ENCODE measurements at regions of chr12 and their contacts with region 1.

Region 1: DNA sequence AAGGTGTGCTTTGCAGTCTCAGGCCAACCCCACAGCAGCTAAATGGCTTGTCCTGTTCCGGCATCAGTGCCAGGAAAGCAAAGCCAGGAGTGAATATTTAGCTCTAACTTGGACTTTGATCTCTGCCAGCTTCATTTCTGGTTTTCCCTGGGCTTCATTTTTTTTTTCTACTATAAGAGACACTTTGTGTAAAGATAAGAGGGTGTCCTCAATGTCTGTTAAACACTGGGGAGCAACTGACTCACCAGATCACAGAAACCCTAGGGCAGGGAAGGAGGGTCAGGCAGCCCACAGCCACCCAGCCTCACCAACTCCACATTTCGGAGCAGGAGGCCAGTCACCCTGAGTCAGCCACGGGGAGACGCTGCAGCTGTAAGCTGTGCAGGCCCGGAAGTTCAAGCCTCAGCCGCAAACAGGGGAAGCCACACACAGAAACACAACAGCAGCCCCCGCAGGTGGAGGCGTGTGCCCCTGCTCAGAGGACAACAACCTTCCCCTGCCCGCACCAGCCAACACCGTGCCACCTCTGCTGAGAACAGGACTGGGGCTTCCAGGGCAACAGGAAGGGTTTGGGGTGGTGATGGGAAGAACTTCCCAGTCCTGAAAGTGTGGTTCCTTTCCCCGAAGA is 6.3 kb downstream of the TNFRSF1A start:
- DNase-seq: peak; percentile 64 to 93 (median 80)
- ATAC-seq: peak; percentile 74 to 80
- H3K4me3 Mint-ChIP-seq: no peak overlapping the region
- H3K27ac Mint-ChIP-seq: peak overlapping the region in 1 of 10 donors; percentile 81
- H3K4me1 Mint-ChIP-seq: peaks cover 36 to 59% (median 52%) of the 10 kb centered on the region in 4 donors
- H3K27me3 Mint-ChIP-seq: peaks cover 0 to 3% (median 0%) of the 10 kb centered on the region in 5 donors

Region 2: DNA sequence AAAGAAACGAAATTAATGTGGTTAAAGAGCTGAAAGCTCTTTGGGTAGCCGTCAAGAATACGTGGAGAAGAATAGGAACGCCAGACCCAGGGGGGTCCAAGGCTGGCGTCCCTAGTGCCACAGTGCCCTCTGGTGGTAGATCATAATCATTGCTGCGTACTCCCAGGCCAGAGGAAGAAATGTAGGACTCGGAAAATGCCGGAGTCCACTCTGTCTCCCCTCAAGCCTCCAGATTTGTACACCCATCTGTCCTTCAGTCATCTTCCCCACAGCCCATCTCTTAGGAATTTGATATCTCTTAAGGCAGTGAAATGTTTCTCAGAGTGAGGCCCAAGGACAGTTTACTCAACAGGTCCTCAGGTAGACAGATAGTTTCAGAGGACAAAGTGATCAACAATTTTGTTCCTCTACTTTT is 50.5 kb before region 1 on chr12:
- POLR2A ChIA-PET with region 1: no interaction called
- DNase-seq: peak; percentile 41 to 80 (median 63)
- ATAC-seq: peak; percentile 77 to 96
- H3K4me3 Mint-ChIP-seq: no peak overlapping the region
- H3K27ac Mint-ChIP-seq: no peak overlapping the region
- H3K4me1 Mint-ChIP-seq: peaks cover 0 to 4% (median 3%) of the 10 kb centered on the region in 4 donors
- H3K27me3 Mint-ChIP-seq: peaks cover 4 to 29% (median 12%) of the 10 kb centered on the region in 5 donors

Region 3: GRCh38 chr12:6307529-6307928 is 28.0 kb before region 1 on chr12:
- POLR2A ChIA-PET with region 1: no interaction called
- DNase-seq: no peak
- ATAC-seq: no peak
- H3K4me3 Mint-ChIP-seq: no peak overlapping the region
- H3K27ac Mint-ChIP-seq: no peak overlapping the region
- H3K4me1 Mint-ChIP-seq: peaks cover 0 to 2% (median 0%) of the 10 kb centered on the region in 4 donors
- H3K27me3 Mint-ChIP-seq: peaks cover 3 to 26% (median 13%) of the 10 kb centered on the region in 5 donors

Region 4: GRCh38 chr12:6367065-6367968 is 31.8 kb after region 1 on chr12:
- POLR2A ChIA-PET with region 1: interaction called, 358 read pairs
- DNase-seq: peak in 9 of 10 donors; percentile 20 to 78 (median 39)
- ATAC-seq: peak; percentile 70 to 74
- H3K4me3 Mint-ChIP-seq: peak overlapping the region in 4 of 10 donors; percentile 15 to 36 (median 35)
- H3K27ac Mint-ChIP-seq: peak overlapping the region; percentile 34 to 88 (median 78)
- H3K4me1 Mint-ChIP-seq: peaks cover 16 to 44% (median 40%) of the 10 kb centered on the region in 4 donors
- H3K27me3 Mint-ChIP-seq: no peaks in the 10 kb centered on the region

Region 5: GRCh38 chr12:6423267-6424007 is 87.9 kb after region 1 on chr12:
- POLR2A ChIA-PET with region 1: interaction called, 27 read pairs
- DNase-seq: peak; percentile 45 to 91 (median 76)
- ATAC-seq: peak; percentile 62 to 71
- H3K4me3 Mint-ChIP-seq: peak overlapping the region in 7 of 10 donors; percentile 0 to 55 (median 25)
- H3K27ac Mint-ChIP-seq: peak overlapping the region; percentile 71 to 93 (median 87)
- H3K4me1 Mint-ChIP-seq: peaks cover 20 to 46% (median 38%) of the 10 kb centered on the region in 4 donors
- H3K27me3 Mint-ChIP-seq: no peaks in the 10 kb centered on the region

Region 6: DNA sequence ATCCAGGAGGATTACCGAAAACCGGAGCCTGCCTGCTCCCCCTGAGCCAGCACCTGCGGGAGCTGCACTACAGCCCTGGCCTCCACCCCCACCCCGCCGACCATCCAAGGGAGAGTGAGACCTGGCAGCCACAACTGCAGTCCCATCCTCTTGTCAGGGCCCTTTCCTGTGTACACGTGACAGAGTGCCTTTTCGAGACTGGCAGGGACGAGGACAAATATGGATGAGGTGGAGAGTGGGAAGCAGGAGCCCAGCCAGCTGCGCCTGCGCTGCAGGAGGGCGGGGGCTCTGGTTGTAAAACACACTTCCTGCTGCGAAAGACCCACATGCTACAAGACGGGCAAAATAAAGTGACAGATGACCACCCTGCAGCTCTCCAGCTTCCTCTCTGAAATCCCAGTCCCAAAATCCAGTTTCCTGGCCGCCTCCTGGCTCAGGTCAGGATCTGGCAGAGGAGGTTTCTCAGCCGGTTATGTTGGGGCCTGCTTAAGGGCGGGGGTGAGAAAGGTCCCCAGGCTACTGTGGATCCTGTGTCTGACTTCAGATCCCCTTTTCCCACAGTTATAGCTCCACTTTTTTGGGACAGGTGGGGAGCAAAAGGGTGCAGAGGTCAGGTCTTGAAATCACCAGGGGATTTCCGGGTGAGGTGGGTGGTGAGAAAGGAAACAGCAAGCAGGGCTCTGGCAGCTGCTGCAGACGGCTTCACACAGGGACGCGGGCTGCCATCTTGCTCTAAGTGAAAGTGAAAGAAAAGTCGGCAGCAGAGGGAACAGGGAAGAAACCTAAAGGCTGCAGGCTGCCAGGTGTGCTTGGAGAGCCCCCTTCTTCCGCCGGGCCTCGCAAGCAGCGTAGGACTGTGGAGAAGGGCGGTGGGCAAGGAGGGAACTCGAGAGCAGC is 116.0 kb after region 1 on chr12 and contains the start of gene TAPBPL:
- POLR2A ChIA-PET with region 1: interaction called, 26 read pairs
- DNase-seq: peak; percentile 65 to 90 (median 83)
- ATAC-seq: peak; percentile 86 to 95
- H3K4me3 Mint-ChIP-seq: peak within 1 kb of the TSS; percentile 95 to 100 (median 98)
- H3K27ac Mint-ChIP-seq: peak within 1 kb of the TSS; percentile 95 to 100 (median 100)
- H3K4me1 Mint-ChIP-seq: peaks cover 46 to 79% (median 75%) of the 10 kb centered on the region in 4 donors
- H3K27me3 Mint-ChIP-seq: no peaks in the 10 kb centered on the region
- polyA plus RNA-seq, gene TAPBPL: 46.0 to 126 (median 106) TPM

Region 7: GRCh38 chr12:6533923-6534694 is 198.5 kb after region 1 on chr12 and contains the start of gene GAPDH:
- POLR2A ChIA-PET with region 1: interaction called, 13 read pairs
- DNase-seq: peak in 8 of 10 donors; percentile 69 to 91 (median 82)
- ATAC-seq: peak; percentile 58 to 68
- H3K4me3 Mint-ChIP-seq: peak within 1 kb of the TSS; percentile 87 to 97 (median 92)
- H3K27ac Mint-ChIP-seq: peak within 1 kb of the TSS; percentile 94 to 99 (median 98)
- H3K4me1 Mint-ChIP-seq: peaks cover 18 to 51% (median 50%) of the 10 kb centered on the region in 4 donors
- H3K27me3 Mint-ChIP-seq: no peaks in the 10 kb centered on the region
- polyA plus RNA-seq, gene GAPDH: 1,014 to 1,110 (median 1,062) TPM